Dorsolateral prefrontal cortex (tissue), 120 donors: ENCODE measurements at regions of chr21 and their contacts with region 1.

Region 1: DNA sequence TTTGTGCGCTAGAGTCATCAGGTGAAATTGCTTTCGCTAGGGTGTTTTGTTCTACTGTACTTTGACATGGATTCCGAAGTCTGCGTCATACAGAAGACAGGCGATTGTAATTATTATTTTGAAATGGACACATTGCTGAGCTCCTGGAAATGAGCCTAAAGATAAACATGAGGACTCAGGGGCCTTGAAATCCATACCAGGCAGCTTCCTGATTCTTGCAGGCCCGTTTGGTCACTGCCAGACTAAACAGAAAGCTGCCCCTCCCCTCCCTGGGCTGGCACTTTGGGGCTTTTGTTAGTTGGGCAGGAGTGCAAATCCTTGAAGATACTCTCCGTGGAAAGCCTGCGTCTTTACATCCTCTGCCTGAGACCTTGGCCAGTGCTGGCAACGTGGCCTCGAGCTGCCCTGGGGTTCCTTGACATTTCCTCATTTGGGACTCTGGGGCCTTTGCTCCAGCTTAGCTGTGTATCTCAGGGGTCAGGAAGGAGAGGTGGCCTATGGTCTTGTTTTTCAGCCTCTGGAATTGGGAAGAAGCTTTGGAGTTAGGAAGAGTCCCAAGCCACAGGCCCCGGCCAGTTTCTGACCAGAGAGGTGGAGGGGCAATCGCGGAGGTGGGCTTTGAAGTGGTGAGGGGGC is 26.9 kb upstream of the KCNE2 start:
- DNase-seq: no peak
- H3K4me3 ChIP-seq: no peak overlapping the region
- H3K27ac ChIP-seq: peak overlapping the region in 1 of 59 donors; percentile 31
- H3K27me3 ChIP-seq: no peaks in the 10 kb centered on the region
- CTCF ChIP-seq: no peak

Region 2: GRCh38 chr21:33947451-33948095 is 389.3 kb before region 1 on chr21:
- intact Hi-C with region 1: loop called in 1 of 2 experiments (anchors 10 kb)
- DNase-seq: peak in 9 of 10 donors; percentile 59 to 88 (median 75)
- H3K4me3 ChIP-seq: peak overlapping the region in 50 of 59 donors; percentile 1 to 51 (median 23)
- H3K27ac ChIP-seq: peak overlapping the region in 58 of 59 donors; percentile 28 to 97 (median 88)
- H3K27me3 ChIP-seq: no peaks in the 10 kb centered on the region
- CTCF ChIP-seq: no peak